CD14-positive monocyte (primary cell): ENCODE measurements at regions of chr15 and their contacts with region 1.

Region 1: DNA sequence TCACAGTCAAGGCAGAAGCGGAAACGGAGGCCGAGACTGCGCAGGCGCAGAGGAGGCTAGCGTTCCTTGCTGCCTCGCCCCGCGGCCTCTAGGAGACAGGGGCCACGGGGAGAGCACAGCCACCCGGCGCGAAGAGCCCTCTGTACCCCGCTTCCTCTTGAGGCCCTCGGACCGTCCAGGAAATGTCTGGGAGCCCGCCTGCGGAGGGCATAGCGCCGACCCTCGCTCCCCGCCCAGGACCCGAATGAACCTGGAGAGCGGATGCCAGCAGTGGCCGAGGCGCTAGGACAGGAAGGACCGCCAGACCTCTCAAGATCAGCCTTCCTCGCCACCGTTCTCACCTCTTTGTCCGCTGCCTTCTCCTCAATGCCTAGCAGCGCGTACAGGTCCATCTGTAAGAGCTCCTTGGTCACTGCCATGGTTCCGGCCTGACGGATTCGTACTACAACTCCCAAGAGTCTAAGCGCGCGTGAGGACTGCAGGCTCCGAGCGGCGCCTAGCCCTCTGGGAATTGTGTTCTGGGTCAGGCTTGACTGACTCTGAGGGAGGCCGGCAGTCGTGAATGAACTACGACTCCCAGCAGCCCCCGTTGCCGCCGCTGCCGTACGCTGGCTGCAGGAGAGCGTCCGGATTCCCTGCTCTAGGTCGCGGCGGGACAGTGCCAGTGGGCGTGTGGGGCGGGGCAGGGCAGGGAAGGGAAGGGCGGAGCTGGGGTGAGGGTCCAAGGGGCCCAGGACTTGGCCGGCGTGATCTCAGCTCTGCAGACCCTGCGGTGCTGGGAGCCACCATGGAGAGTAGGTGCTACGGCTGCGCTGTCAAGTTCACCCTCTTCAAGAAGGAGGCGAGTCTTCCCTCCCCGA is at the starts of genes DNAJC17 and ZFYVE19:
- DNase-seq: peak; percentile 92 to 97 (median 92)
- H3K4me3 ChIP-seq: peak within 1 kb of the TSS; percentile 82 to 100 (median 97)
- H3K4me3 Mint-ChIP-seq: peak within 1 kb of the TSS; percentile 97
- H3K27ac ChIP-seq: peak within 1 kb of the TSS; percentile 72 to 85
- H3K27ac Mint-ChIP-seq: peak within 1 kb of the TSS; percentile 86 to 97 (median 94)
- H3K4me1 ChIP-seq: peaks cover 14 to 21% of the 10 kb centered on the region in 2 donors
- H3K4me1 Mint-ChIP-seq: peaks cover 27% of the 10 kb centered on the region
- H3K27me3 ChIP-seq: no peaks in the 10 kb centered on the region
- H3K27me3 Mint-ChIP-seq: peaks cover 0 to 3% (median 3%) of the 10 kb centered on the region in 3 donors
- CTCF ChIP-seq: no peak
- polyA plus RNA-seq, gene DNAJC17: 15.7 to 31.6 (median 21.5) TPM
- polyA plus RNA-seq, gene ZFYVE19: 8.2 to 62.9 (median 10.3) TPM

Region 2: DNA sequence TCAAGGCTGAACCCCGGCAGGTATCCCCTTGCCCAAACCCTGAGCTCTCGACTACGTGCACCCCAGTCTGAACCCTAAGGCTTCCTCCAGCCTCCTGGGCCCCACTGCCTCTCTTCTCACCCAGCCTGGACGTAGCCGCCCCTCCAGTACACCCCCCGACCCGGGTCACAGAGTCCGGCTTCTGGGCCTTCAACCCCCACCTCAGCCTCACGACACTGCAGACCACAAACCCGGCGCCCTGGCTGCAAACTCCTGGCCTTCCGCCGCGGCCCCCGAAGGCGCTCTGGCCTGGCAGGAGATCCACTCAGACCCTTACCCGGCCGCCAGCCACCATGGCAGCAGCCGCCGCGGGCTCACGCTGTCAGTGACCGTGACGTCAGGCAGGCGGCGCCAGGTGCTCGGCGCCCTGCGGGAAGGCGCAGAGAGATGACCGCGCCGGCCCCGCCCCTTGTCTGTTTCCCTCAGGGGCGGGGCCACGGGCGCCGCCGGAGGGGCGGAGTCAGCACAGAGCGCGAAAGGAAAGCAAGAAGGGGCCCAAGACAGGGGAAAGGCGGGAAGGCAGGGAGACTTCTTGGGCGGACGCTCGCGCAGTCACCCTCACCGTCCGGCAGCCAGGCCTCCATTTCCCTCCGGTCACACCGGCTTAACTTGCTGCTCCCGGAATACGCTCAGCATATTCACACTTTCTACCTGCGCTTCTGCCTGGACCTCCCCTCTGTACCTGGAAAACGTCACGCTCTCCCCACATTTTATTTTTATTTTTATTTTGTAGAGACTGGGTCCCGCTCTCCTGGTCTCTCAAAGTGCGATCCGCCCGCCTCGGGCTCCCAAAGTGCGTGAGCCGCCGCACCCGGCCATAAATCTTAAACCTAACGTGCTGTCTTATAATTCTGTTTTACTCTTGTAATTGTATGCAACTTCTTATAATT is 52.1 kb before region 1 on chr15 and contains the start of gene RMDN3:
- intact Hi-C with region 1: loop called (anchors 2 to 10 kb)
- DNase-seq: peak; percentile 91 to 92 (median 92)
- H3K4me3 ChIP-seq: peak within 1 kb of the TSS; percentile 55 to 99 (median 90)
- H3K4me3 Mint-ChIP-seq: peak within 1 kb of the TSS; percentile 91 to 93
- H3K27ac ChIP-seq: peak within 1 kb of the TSS; percentile 46 to 90
- H3K27ac Mint-ChIP-seq: peak within 1 kb of the TSS; percentile 78 to 95 (median 90)
- H3K4me1 ChIP-seq: peaks cover 14 to 18% of the 10 kb centered on the region in 2 donors
- H3K4me1 Mint-ChIP-seq: peaks cover 12% of the 10 kb centered on the region
- H3K27me3 ChIP-seq: no peaks in the 10 kb centered on the region
- H3K27me3 Mint-ChIP-seq: peaks cover 0 to 1% (median 0%) of the 10 kb centered on the region in 3 donors
- CTCF ChIP-seq: no peak
- polyA plus RNA-seq, gene RMDN3: 9.8 to 13.5 (median 13.2) TPM

Region 3: GRCh38 chr15:40763801-40764732 is 43.2 kb before region 1 on chr15 and contains the start of gene GCHFR:
- intact Hi-C with region 1: loop called (anchors 2 to 10 kb)
- DNase-seq: peak; percentile 56 to 58 (median 57)
- H3K4me3 ChIP-seq: peak within 1 kb of the TSS; percentile 59 to 89 (median 62)
- H3K4me3 Mint-ChIP-seq: peak within 1 kb of the TSS; percentile 85 to 91
- H3K27ac ChIP-seq: peak within 1 kb of the TSS; percentile 70 to 82
- H3K27ac Mint-ChIP-seq: peak within 1 kb of the TSS; percentile 81 to 97 (median 96)
- H3K4me1 ChIP-seq: peaks cover 41 to 48% of the 10 kb centered on the region in 2 donors
- H3K4me1 Mint-ChIP-seq: peaks cover 40% of the 10 kb centered on the region
- H3K27me3 ChIP-seq: no peaks in the 10 kb centered on the region
- H3K27me3 Mint-ChIP-seq: peaks cover 2 to 12% (median 11%) of the 10 kb centered on the region in 3 donors
- CTCF ChIP-seq: peak; percentile 57
- polyA plus RNA-seq, gene GCHFR: 19.1 to 46.7 (median 45.9) TPM

Region 4: DNA sequence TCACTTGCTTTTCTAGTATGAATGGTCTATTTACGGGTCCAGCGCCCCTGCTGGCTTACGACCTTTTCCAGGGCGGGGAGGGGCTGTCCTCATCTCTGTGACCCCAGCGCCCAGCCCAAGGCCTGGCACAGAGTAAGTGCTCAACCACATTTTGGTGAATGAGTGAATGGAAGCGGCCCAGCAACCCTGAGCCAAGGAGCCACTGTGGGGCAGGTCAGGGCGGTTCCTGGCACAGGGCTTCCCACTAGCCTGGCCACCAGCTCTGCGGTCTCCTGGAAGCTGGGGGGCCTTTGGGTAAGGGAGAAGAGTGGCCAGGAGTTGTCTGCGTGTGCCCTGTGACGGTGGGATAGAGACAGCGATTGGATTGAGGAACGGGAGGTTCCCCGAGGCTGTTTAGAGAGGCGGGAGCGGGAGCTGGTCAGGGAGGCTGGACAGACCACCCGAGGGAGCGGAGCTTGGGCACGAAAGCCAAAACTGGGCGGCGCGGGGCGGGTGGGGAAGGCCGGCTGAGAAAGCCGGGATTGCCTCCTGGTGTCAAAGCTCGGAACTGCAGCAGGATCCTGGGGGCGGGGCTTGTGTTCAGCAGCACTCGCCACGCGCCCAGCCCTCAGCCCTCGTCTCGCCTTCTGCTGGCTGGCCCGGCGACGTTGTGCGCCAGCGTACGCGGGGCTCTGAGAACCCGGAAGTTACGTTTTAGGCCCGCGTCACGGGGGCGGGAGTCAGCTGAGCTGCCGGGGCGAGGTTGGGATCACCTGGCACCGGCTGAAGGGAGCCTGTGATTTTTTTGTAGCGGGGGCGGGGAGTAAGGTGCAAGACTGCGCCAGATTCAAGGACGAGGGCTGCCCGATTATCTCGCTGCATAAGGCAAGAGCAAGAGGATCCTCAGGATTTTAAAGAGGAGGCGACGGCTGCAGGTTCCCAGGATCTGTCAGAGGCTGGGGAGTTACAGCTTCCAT is 86.8 kb after region 1 on chr15 and contains the start of gene VPS18:
- intact Hi-C with region 1: loop called in 1 of 2 experiments (anchors 10 kb)
- DNase-seq: peak; percentile 97 to 98 (median 97)
- H3K4me3 ChIP-seq: peak within 1 kb of the TSS; percentile 87 to 98 (median 89)
- H3K4me3 Mint-ChIP-seq: peak within 1 kb of the TSS; percentile 97 to 98
- H3K27ac ChIP-seq: peak within 1 kb of the TSS; percentile 91 to 97
- H3K27ac Mint-ChIP-seq: peak within 1 kb of the TSS; percentile 98 to 100 (median 99)
- H3K4me1 ChIP-seq: peaks cover 24 to 35% of the 10 kb centered on the region in 2 donors
- H3K4me1 Mint-ChIP-seq: peaks cover 31% of the 10 kb centered on the region
- H3K27me3 ChIP-seq: no peaks in the 10 kb centered on the region
- H3K27me3 Mint-ChIP-seq: peaks cover 1 to 14% (median 7%) of the 10 kb centered on the region in 3 donors
- CTCF ChIP-seq: peak; percentile 91
- polyA plus RNA-seq, gene VPS18: 12.1 to 22.8 (median 21.8) TPM